ENCODE measurements at regions of chr6 and their contacts with region 1.

Region 1: DNA sequence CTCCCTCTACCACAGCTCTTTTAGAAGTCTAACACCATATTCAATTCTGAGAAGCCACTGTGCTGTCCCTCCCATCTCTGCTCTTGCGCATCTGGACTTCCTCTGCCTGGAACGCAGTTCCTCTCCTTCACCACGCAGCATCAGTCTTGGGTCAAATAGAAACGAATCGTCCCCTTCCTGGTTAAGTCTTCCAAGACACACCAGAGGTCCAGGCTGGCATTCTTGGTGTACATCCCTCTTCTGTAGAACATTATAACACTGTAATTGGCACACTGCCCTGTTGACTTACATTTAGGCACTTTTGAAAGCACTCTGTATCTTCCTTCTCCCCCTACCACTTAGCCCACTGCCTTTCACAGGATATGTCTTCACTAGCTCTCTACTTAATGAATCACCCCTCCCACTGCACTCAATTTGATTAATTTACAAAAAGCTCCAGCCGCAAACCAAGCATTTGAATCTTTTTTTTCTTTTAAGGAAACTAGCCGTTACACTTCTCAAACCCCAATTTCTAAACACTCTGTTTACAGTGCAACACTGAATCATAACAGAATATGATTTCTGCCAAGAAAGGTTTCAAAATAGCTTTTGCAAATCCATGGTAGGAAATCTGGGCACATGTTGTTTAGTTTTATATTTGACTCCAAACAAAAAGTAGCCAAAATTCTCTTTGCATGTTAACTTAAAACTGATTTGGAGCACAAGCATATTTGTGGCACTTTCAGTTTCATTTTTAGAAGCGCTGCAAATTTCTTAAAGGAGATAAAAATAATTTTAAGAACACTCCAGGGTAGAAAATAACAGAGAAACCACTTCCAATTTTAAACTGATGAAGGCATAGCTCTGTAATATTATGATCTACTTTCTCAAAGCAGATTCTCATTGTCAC is 140.7 kb upstream of the CARMIL1 start:
- DNase-seq: peak; percentile 71
- H3K4me3 Mint-ChIP-seq: peak overlapping the region; percentile 92
- H3K27ac Mint-ChIP-seq: peak overlapping the region; percentile 100
- H3K4me1 Mint-ChIP-seq: peaks cover 39% of the 10 kb centered on the region
- H3K27me3 Mint-ChIP-seq: no peaks in the 10 kb centered on the region

Region 2: DNA sequence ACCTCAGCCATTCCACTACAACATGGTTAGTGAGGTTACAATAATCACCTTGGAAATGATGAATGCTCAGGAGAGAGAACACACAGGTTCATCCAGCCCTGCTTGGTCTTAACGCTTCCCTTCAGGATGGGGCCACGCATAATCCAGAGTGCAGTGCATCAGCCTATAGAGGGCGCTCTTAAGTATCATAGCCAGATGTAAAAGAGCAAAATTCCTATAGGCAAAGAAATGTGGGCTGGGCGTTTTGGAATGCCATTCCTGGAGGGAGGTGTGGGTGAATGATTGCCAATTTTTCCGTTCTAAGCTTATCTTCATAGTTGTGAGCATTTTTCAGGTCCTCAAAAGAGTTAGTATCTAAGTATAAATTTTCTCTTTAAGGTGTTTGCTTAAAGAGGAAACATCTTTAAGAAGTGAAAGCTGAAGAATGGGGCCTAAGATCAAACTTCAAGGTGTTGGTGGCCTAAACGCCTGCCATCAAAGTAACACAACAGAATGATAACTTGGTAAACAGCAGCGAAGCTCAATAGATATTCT is 204.5 kb before region 1 on chr6:
- intact Hi-C with region 1: loop called (anchors 5 kb)
- DNase-seq: no peak
- H3K4me3 Mint-ChIP-seq: peak overlapping the region; percentile 89
- H3K27ac Mint-ChIP-seq: peak overlapping the region; percentile 92
- H3K4me1 Mint-ChIP-seq: peaks cover 90% of the 10 kb centered on the region
- H3K27me3 Mint-ChIP-seq: no peaks in the 10 kb centered on the region

Region 3: DNA sequence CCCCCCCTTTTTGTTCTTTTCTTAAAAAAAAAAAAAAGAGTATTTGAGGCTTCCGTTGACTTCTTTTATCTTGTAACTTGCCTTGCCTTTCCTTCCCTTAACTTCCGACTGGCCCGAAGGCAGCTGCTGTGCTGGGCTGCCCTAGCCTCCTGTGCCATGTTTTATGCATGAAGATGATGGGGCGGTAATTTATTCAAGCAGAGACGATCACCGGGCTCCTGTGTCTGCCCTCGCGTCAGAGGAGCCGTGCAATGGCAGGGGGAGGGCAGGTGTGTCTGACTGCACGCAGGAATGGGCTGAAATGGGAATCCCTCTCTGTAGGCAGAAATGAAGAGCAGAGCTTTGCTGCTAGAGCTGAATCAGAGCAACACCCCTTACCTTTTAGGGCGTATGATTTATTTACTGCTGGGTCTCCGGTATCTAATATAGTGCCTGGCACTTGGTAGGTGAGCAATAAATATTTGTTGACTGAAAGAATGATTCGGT is 96.4 kb before region 1 on chr6:
- intact Hi-C with region 1: loop called (anchors 5 kb)
- DNase-seq: peak; percentile 25
- H3K4me3 Mint-ChIP-seq: peak overlapping the region; percentile 88
- H3K27ac Mint-ChIP-seq: peak overlapping the region; percentile 86
- H3K4me1 Mint-ChIP-seq: peaks cover 51% of the 10 kb centered on the region
- H3K27me3 Mint-ChIP-seq: no peaks in the 10 kb centered on the region

Region 4: GRCh38 chr6:25070547-25071366 is 67.7 kb before region 1 on chr6:
- intact Hi-C with region 1: no loop called
- DNase-seq: peak; percentile 74
- H3K4me3 Mint-ChIP-seq: no peak overlapping the region
- H3K27ac Mint-ChIP-seq: peak overlapping the region; percentile 77
- H3K4me1 Mint-ChIP-seq: peaks cover 8% of the 10 kb centered on the region
- H3K27me3 Mint-ChIP-seq: peaks cover 5% of the 10 kb centered on the region

Region 5: GRCh38 chr6:25100288-25100687 is 38.2 kb before region 1 on chr6:
- intact Hi-C with region 1: no loop called
- DNase-seq: no peak
- H3K4me3 Mint-ChIP-seq: no peak overlapping the region
- H3K27ac Mint-ChIP-seq: no peak overlapping the region
- H3K4me1 Mint-ChIP-seq: peaks cover 25% of the 10 kb centered on the region
- H3K27me3 Mint-ChIP-seq: no peaks in the 10 kb centered on the region

Region 6: GRCh38 chr6:25166955-25167748 is 28.7 kb after region 1 on chr6:
- intact Hi-C with region 1: loop called (anchors 1 kb)
- DNase-seq: no peak
- H3K4me3 Mint-ChIP-seq: peak overlapping the region; percentile 91
- H3K27ac Mint-ChIP-seq: peak overlapping the region; percentile 97
- H3K4me1 Mint-ChIP-seq: peaks cover 69% of the 10 kb centered on the region
- H3K27me3 Mint-ChIP-seq: no peaks in the 10 kb centered on the region

Region 7: DNA sequence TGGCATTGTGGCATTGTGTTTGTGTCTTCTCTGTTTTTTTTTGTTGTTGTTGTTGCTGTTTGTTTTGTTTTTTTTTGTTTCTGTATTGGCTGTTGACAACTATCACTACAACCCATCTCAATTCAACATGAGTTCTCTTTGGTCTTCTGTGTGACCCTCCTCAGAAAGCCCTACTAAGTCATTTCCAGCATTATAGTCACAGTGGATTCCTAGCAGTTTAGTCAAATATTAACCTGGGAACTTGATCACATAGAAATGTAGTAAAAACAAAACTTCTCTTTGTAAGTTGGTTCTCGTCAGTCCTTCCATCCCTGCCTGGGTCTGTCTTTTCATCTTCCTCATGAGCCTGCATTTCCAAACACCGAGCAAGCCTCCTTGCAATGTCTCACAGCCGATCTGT is 775.3 kb after region 1 on chr6:
- intact Hi-C with region 1: loop called (anchors 2 kb)
- DNase-seq: no peak
- H3K4me3 Mint-ChIP-seq: no peak overlapping the region
- H3K27ac Mint-ChIP-seq: peak overlapping the region; percentile 77
- H3K4me1 Mint-ChIP-seq: peaks cover 40% of the 10 kb centered on the region
- H3K27me3 Mint-ChIP-seq: no peaks in the 10 kb centered on the region